CD4-positive, alpha-beta memory T cell (primary cell): ENCODE measurements at regions of chr20 and their contacts with region 1.

Region 1: DNA sequence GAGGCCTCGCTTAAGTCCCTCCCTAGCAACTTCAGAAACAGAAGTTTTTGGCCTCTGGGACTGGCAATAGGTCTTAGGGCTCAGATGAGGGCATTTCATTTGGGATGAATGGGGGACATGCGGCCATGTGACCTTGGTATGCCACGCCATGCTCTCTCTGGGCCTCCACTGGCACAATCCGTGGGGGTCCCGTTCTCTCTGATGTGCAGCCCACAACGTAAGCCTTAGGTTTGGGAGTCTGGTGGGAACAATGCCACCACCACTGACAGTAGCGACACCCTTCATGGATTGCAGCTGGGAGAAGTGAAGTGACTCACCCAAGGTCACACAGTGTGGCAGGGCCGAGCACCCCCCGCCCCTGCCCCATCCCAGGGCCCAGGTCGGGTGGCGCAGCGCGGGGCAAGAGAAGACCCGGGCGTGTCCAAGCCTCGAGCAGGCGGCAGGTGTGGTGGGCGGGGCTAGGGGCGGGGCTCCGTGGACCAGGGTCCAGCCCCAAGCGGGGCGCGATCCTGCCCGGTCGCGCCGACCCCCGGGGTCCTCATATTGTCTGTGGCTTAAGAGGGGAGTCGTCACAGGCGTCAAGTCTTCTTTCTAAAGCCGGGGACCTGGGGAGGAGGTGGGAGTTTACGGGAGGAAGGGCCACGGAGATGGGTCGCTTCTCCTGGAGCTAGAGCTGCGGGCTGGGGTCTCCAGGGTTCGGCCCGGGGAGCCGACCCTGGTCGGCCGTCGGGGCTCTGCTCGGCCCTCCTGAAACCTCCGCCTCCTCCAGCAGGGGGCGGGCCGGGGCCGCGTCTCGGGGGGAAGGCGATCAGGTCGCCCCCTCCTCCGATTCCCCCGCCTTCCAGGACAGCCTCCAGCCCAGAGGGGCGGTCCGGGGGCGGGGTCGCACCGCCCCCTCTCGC is 698 bp upstream of the CEBPB start:
- DNase-seq: peak; percentile 79 to 86 (median 82)
- H3K4me3 ChIP-seq: peak overlapping the region in 1 of 2 donors; percentile 76
- H3K4me3 Mint-ChIP-seq: peak overlapping the region; percentile 38 to 68 (median 58)
- H3K27ac ChIP-seq: peak overlapping the region; percentile 49
- H3K27ac Mint-ChIP-seq: peak overlapping the region; percentile 10 to 75 (median 36)
- H3K4me1 ChIP-seq: peaks cover 30% of the 10 kb centered on the region
- H3K4me1 Mint-ChIP-seq: peaks cover 7 to 39% (median 23%) of the 10 kb centered on the region in 4 donors
- H3K27me3 ChIP-seq: no peaks in the 10 kb centered on the region
- H3K27me3 Mint-ChIP-seq: peaks cover 6 to 10% of the 10 kb centered on the region in 2 donors

Region 2: GRCh38 chr20:50115591-50116372 is 74.2 kb before region 1 on chr20:
- CTCF ChIA-PET with region 1: interaction called, 152 read pairs
- POLR2A ChIA-PET with region 1: interaction called, 20 read pairs
- intact Hi-C with region 1: no loop called
- DNase-seq: peak; percentile 88 to 93 (median 89)
- H3K4me3 ChIP-seq: peak overlapping the region; percentile 39 to 52
- H3K4me3 Mint-ChIP-seq: peak overlapping the region; percentile 81 to 95 (median 90)
- H3K27ac ChIP-seq: peak overlapping the region; percentile 59
- H3K27ac Mint-ChIP-seq: peak overlapping the region; percentile 74 to 97 (median 97)
- H3K4me1 ChIP-seq: peaks cover 46% of the 10 kb centered on the region
- H3K4me1 Mint-ChIP-seq: peaks cover 42 to 58% (median 50%) of the 10 kb centered on the region in 4 donors
- H3K27me3 ChIP-seq: no peaks in the 10 kb centered on the region
- H3K27me3 Mint-ChIP-seq: no peaks in the 10 kb centered on the region

Region 3: DNA sequence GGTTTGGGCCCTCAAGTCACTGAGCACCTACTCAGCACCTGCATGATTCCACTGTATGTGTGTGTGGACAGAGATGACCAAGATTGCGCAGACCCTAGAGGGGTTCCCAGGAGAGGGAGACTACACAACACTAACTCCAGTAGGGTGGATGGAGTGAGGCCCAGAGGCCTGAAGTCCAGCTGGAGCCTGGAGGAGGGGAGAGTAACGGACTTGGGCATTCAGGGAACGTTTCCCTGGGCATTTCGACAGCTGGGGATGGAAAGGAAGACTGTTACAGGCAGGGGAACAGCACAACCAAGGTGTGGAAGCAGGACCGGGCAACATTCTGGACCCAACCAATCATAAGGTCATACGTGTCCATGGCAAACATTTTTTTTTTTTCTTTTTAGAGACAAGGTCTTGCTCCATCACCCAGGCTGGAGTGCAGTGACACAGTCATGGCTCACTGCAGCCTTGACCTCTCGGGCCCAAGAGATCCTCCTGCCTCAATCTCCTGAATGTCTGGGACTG is 10.4 kb before region 1 on chr20:
- CTCF ChIA-PET with region 1: interaction called, 10 read pairs
- POLR2A ChIA-PET with region 1: interaction called, 8 read pairs
- intact Hi-C with region 1: no loop called
- DNase-seq: peak in 1 of 5 donors; percentile 4
- H3K4me3 ChIP-seq: no peak overlapping the region
- H3K4me3 Mint-ChIP-seq: no peak overlapping the region
- H3K27ac ChIP-seq: no peak overlapping the region
- H3K27ac Mint-ChIP-seq: peak overlapping the region in 1 of 7 donors; percentile 53
- H3K4me1 ChIP-seq: no peaks in the 10 kb centered on the region
- H3K4me1 Mint-ChIP-seq: peaks cover 0 to 7% (median 0%) of the 10 kb centered on the region in 4 donors
- H3K27me3 ChIP-seq: no peaks in the 10 kb centered on the region
- H3K27me3 Mint-ChIP-seq: peaks cover 2 to 4% of the 10 kb centered on the region in 2 donors

Region 4: DNA sequence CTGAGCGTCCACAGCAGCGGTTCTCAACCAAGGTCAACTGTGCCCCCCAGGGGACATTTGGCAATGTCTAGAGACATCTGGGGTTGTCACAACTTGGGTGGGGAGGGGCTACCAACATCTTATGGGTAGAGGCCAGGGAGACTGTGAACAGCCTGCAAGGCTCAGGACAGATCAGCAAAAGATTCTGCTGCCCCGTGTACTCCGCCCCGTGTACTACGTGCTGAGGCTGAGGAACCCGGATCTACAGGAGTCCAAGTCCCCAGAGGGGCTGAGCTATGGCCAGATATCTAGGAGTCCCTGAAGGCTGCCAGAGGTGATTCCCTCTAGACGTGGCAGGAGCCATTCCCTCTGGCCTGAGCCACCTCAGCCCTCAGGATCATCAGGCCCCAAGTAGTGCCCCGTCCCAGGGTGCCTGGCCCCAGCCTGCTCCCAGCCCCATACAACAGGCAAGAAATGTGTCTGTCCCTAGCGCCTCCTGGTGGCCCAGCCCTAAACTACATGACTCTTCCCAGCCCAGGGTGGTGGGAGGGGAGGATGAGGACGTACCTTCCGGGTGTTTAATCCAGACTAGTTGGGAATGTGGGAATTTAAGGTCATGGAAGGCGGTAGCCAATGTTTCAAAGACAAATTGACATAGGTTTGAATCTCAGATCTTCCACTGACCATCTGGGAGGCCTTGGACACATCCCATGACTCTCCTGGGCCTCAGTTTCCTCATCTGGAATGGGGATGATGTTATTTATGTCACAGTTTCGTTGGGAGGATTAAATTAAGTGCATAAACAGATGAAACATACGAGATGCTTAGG is 270.7 kb after region 1 on chr20:
- CTCF ChIA-PET with region 1: interaction called, 330 read pairs
- POLR2A ChIA-PET with region 1: interaction called, 23 read pairs
- intact Hi-C with region 1: loop called (anchors 1 kb)
- DNase-seq: peak; percentile 70 to 80 (median 76)
- H3K4me3 ChIP-seq: no peak overlapping the region
- H3K4me3 Mint-ChIP-seq: no peak overlapping the region
- H3K27ac ChIP-seq: no peak overlapping the region
- H3K27ac Mint-ChIP-seq: peak overlapping the region in 2 of 7 donors; percentile 15 to 37
- H3K4me1 ChIP-seq: peaks cover 8% of the 10 kb centered on the region
- H3K4me1 Mint-ChIP-seq: peaks cover 0 to 5% (median 4%) of the 10 kb centered on the region in 4 donors
- H3K27me3 ChIP-seq: no peaks in the 10 kb centered on the region
- H3K27me3 Mint-ChIP-seq: peaks cover 2 to 10% of the 10 kb centered on the region in 2 donors

Region 5: GRCh38 chr20:50575847-50576720 is 386.2 kb after region 1 on chr20:
- CTCF ChIA-PET with region 1: interaction called, 3 read pairs
- POLR2A ChIA-PET with region 1: no interaction called
- intact Hi-C with region 1: loop called (anchors 1 kb)
- DNase-seq: peak; percentile 48 to 59 (median 57)
- H3K4me3 ChIP-seq: no peak overlapping the region
- H3K4me3 Mint-ChIP-seq: no peak overlapping the region
- H3K27ac ChIP-seq: no peak overlapping the region
- H3K27ac Mint-ChIP-seq: peak overlapping the region in 4 of 7 donors; percentile 47 to 88 (median 82)
- H3K4me1 ChIP-seq: peaks cover 10% of the 10 kb centered on the region
- H3K4me1 Mint-ChIP-seq: peaks cover 12 to 45% (median 29%) of the 10 kb centered on the region in 4 donors
- H3K27me3 ChIP-seq: no peaks in the 10 kb centered on the region
- H3K27me3 Mint-ChIP-seq: no peaks in the 10 kb centered on the region

Region 6: GRCh38 chr20:50750145-50750671 is 560.3 kb after region 1 on chr20:
- CTCF ChIA-PET with region 1: interaction called, 5 read pairs
- POLR2A ChIA-PET with region 1: interaction called, 3 read pairs
- intact Hi-C with region 1: loop called (anchors 1 kb)
- DNase-seq: no peak
- H3K4me3 ChIP-seq: no peak overlapping the region
- H3K4me3 Mint-ChIP-seq: no peak overlapping the region
- H3K27ac ChIP-seq: no peak overlapping the region
- H3K27ac Mint-ChIP-seq: no peak overlapping the region
- H3K4me1 ChIP-seq: peaks cover 11% of the 10 kb centered on the region
- H3K4me1 Mint-ChIP-seq: peaks cover 4 to 13% (median 11%) of the 10 kb centered on the region in 4 donors
- H3K27me3 ChIP-seq: no peaks in the 10 kb centered on the region
- H3K27me3 Mint-ChIP-seq: no peaks in the 10 kb centered on the region